ENCODE measurements at regions of chr6 and their contacts with region 1.

Region 1: GRCh38 chr6:9699888-9700287 is 715.0 kb downstream of the TFAP2A start:
- DNase-seq: no peak
- H3K4me3 ChIP-seq: no peak overlapping the region
- H3K27ac ChIP-seq: no peak overlapping the region
- H3K4me1 ChIP-seq: no peaks in the 10 kb centered on the region
- H3K27me3 ChIP-seq: no peaks in the 10 kb centered on the region
- CTCF ChIP-seq: no peak

Region 2: DNA sequence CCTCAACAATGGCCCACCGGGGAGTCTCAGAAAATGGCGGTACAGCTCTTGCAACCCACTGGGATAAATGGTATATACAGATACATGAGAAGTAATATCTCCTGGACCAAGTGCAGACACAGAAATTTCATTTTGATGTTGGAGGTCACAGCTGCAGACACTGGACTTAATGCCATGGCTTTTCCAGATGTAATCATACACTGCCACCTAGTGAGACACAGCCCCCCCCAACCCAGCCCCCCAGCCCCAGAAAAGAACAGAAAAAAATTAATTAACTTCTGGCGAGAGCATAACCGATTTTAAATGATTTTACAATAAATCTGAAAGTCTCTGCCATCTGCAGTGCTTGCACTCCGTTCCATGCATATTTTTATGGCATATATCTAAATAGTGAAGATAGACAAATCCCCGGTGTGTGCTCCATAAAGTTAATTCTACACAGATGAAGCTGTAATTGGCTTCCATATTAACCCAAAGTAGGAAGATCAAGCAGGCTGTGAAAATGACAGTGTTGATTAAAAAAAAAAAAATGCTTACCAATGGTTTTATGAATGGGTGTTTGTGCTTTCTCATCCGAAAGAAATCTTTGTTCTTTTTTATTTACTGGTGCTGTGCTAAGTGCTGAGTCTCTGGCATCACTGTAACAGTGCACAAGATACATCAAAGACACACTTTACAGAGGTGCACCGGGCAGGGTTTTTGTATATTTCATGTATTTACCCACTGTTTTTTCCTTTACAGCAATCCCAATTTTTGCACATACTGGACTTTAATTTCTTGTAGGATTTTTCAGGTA is 89.1 kb before region 1 on chr6:
- CTCF ChIA-PET with region 1: no interaction called
- dilution Hi-C with region 1: no loop called
- in situ Hi-C with region 1: no loop called
- intact Hi-C with region 1: no loop called
- DNase-seq: no peak
- H3K4me3 ChIP-seq: no peak overlapping the region
- H3K27ac ChIP-seq: no peak overlapping the region
- H3K4me1 ChIP-seq: peaks cover 6% of the 10 kb centered on the region
- H3K27me3 ChIP-seq: no peaks in the 10 kb centered on the region
- CTCF ChIP-seq: peak in 1 of 2 donors; percentile 1

Region 3: GRCh38 chr6:9985481-9985880 is 285.6 kb after region 1 on chr6:
- CTCF ChIA-PET with region 1: interaction called, 19 read pairs
- dilution Hi-C with region 1: no loop called
- in situ Hi-C with region 1: no loop called
- intact Hi-C with region 1: no loop called
- DNase-seq: no peak
- H3K4me3 ChIP-seq: no peak overlapping the region
- H3K27ac ChIP-seq: no peak overlapping the region
- H3K4me1 ChIP-seq: no peaks in the 10 kb centered on the region
- H3K27me3 ChIP-seq: no peaks in the 10 kb centered on the region
- CTCF ChIP-seq: no peak